GM12878 (cell line): ENCODE measurements at regions of chr1 and their contacts with region 1.

Region 1: DNA sequence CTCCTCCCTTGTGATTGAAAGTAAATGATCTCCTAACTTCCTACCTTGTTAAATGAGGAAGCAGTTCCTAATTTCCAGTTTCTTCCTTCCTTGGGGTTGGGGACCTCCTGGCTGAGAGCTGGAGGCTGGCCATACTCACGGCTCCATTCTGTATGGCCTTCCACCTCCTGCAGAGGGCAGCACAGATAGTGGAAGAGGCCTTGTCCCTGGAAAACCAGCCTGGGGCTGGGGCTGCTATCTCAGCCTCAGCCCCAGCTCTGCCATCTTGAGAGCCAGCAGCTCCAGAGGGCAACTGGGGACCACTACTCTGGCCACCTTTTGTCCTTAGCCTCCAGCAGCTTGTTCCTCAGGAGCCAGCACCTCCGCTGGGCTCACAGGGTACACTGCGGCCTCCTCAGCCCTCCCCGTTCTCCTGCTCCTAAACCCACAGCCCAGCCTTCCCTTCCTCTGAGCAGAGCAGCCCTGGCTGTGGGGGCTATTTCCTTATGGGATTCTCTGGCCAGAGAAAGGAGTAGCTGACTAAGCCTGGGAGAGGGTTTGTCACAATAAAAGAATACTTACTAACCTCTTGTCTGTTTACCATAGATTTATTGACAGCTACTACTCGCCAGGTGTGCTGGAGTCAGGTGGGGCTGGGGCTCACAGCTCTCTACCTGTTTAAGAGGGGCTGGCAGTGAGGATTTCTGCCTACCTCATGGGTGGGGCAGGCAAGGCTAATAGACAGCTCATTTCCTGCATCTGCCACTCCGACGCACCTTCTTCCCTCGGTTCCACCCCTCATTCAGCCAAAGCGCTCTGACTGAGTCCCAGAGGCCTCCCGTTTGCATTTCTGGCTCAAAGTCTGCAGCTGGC is 6.3 kb downstream of the TMEM234 start:
- DNase-seq: no peak
- ATAC-seq: peak; percentile 95
- H3K4me3 ChIP-seq: no peak overlapping the region
- H3K27ac ChIP-seq: no peak overlapping the region
- H3K4me1 ChIP-seq: no peaks in the 10 kb centered on the region
- H3K27me3 ChIP-seq: no peaks in the 10 kb centered on the region
- CTCF ChIP-seq: peak; percentile 82 to 93 (median 91)
- EP300 ChIP-seq: no peak
- POLR2A ChIP-seq: no peak
- RAD21 ChIP-seq: peak; percentile 82

Region 2: GRCh38 chr1:31584041-31584868 is 631.6 kb before region 1 on chr1:
- CTCF ChIA-PET with region 1: no interaction called
- POLR2A ChIA-PET with region 1: no interaction called
- RAD21 ChIA-PET with region 1: no interaction called
- SMC1A ChIA-PET with region 1: no interaction called
- in situ Hi-C with region 1: no loop called
- intact Hi-C with region 1: no loop called
- DNase-seq: no peak
- ATAC-seq: no peak
- H3K4me3 ChIP-seq: no peak overlapping the region
- H3K27ac ChIP-seq: no peak overlapping the region
- H3K4me1 ChIP-seq: no peaks in the 10 kb centered on the region
- H3K27me3 ChIP-seq: no peaks in the 10 kb centered on the region; a peak in 2 of 4 replicates
- CTCF ChIP-seq: no peak
- EP300 ChIP-seq: no peak
- POLR2A ChIP-seq: no peak
- RAD21 ChIP-seq: no peak

Region 3: DNA sequence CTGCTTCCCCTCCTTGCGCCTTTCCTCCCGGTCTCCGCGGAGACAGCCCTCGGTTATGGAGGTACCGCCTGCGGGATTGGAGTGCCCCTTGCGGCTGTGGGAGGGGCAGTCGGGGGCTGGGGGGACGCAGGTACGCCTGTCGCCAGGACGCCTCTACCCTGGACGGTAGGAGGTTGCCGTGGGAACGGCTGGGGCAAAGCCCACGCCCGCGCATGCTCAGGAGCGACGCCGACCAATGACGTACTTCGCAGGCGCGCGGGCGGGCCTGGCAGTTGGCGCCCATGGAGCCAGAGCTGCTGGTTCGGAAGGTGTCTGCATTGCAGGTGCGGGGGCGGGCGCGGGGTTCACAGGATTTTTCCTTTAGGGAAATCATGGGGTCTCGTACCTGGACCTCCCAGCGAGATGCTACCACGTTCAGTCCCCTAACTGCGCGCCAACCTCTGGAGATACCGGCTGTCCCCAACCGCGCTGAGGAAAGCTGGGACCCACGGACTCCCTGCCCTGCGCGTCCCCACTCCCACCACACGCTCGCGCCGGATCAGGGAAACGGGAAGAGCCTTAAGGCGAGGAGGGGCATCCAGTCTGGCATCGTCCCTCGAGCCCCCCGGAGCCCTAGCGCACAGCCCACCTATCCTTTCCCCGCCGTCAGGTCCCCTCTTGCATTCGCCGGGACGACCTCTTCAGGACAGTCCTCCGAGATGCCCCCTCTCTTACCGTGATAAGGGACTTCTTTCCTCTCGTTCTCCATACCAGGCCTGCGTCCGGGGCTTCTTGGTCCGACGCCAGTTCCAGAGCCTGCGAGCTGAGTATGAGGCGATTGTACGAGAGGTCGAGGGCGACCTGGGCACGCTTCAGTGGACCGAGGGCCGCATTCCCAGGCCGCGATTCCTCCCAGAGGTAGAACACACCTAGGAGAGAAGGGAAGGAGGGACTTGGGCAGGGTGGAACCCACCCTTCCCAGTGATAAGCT is 10.2 kb before region 1 on chr1 and contains the start of gene IQCC:
- CTCF ChIA-PET with region 1: interaction called, 27 read pairs
- POLR2A ChIA-PET with region 1: interaction called, 12 read pairs
- RAD21 ChIA-PET with region 1: interaction called, 10 read pairs
- SMC1A ChIA-PET with region 1: interaction called, 15 read pairs
- in situ Hi-C with region 1: no loop called
- intact Hi-C with region 1: no loop called
- DNase-seq: peak; percentile 46
- ATAC-seq: peak; percentile 68
- H3K4me3 ChIP-seq: peak within 1 kb of the TSS; percentile 80
- H3K27ac ChIP-seq: peak within 1 kb of the TSS; percentile 69
- H3K4me1 ChIP-seq: peaks cover 26% of the 10 kb centered on the region
- H3K27me3 ChIP-seq: no peaks in the 10 kb centered on the region
- CTCF ChIP-seq: no peak
- EP300 ChIP-seq: no peak
- POLR2A ChIP-seq: peak; percentile 90
- RAD21 ChIP-seq: no peak
- polyA plus RNA-seq, gene IQCC: 2.1 to 3.8 TPM

Region 4: DNA sequence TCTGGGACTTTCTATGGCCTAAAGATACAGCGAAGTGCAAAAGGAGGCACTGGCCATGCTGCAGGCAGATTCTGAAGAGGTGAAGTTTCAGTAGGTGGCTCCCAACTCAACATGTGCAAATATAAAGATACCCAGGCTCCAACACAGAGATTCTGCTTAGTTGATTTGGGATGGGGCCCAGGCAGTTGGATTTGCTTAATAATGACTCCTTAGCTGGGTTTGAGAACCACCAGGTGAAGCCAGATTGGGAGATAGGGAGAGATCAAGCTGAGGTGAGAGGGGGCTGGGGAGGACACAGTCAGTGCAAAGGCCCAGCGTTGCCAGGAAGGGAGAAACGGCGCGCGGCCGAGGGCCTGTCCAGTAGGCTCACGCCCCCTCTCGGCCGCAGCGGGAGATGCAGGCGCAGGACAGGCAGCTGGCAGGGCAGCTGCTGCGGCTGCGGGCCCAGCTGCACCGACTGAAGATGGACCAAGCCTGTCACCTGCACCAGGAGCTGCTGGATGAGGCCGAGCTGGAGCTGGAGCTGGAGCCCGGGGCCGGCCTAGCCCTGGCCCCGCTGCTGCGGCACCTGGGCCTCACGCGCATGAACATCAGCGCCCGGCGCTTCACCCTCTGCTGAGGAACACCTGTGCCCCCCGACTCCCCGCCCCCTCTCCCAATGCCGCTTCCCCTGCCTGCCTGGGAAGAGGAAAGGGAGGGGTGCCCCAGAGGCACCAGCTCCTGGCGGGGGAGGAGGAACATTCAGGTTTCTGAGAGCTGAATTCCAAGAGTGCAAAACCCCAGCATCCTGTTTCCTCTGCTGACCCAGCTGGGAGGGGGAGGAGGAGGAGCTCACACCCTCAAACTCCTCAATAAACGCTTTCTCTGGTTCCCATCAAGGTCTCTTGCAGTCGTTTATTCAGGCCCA is 32.4 kb after region 1 on chr1:
- CTCF ChIA-PET with region 1: interaction called, 123 read pairs
- POLR2A ChIA-PET with region 1: interaction called, 18 read pairs
- RAD21 ChIA-PET with region 1: interaction called, 45 read pairs
- SMC1A ChIA-PET with region 1: interaction called, 44 read pairs
- in situ Hi-C with region 1: no loop called
- intact Hi-C with region 1: no loop called
- DNase-seq: no peak
- ATAC-seq: peak; percentile 69
- H3K4me3 ChIP-seq: peak overlapping the region; percentile 10; the same call in 1 of the 2 replicates
- H3K27ac ChIP-seq: peak overlapping the region; percentile 89
- H3K4me1 ChIP-seq: peaks cover 52% of the 10 kb centered on the region
- H3K27me3 ChIP-seq: no peaks in the 10 kb centered on the region
- CTCF ChIP-seq: peak; percentile 89 to 99 (median 96)
- EP300 ChIP-seq: no peak
- POLR2A ChIP-seq: peak; percentile 31; the same call in 1 of the 2 replicates
- RAD21 ChIP-seq: peak; percentile 64

Region 5: GRCh38 chr1:32307323-32307722 is 91.5 kb after region 1 on chr1:
- CTCF ChIA-PET with region 1: interaction called, 12 read pairs
- POLR2A ChIA-PET with region 1: no interaction called
- RAD21 ChIA-PET with region 1: interaction called, 5 read pairs
- SMC1A ChIA-PET with region 1: interaction called, 3 read pairs
- in situ Hi-C with region 1: no loop called
- intact Hi-C with region 1: no loop called
- DNase-seq: no peak
- ATAC-seq: no peak
- H3K4me3 ChIP-seq: no peak overlapping the region
- H3K27ac ChIP-seq: 0 out of 2 replicates have a peak overlapping the region, but pooled peaks have one; percentile 8
- H3K4me1 ChIP-seq: peaks cover 14% of the 10 kb centered on the region
- H3K27me3 ChIP-seq: no peaks in the 10 kb centered on the region
- CTCF ChIP-seq: no peak
- EP300 ChIP-seq: no peak
- POLR2A ChIP-seq: no peak
- RAD21 ChIP-seq: no peak

Region 6: GRCh38 chr1:32372149-32372756 is 156.4 kb after region 1 on chr1:
- CTCF ChIA-PET with region 1: interaction called, 15 read pairs
- POLR2A ChIA-PET with region 1: interaction called, 3 read pairs
- RAD21 ChIA-PET with region 1: interaction called, 6 read pairs
- SMC1A ChIA-PET with region 1: interaction called, 9 read pairs
- in situ Hi-C with region 1: no loop called
- intact Hi-C with region 1: no loop called
- DNase-seq: peak; percentile 61
- ATAC-seq: peak; percentile 88
- H3K4me3 ChIP-seq: no peak overlapping the region
- H3K27ac ChIP-seq: no peak overlapping the region
- H3K4me1 ChIP-seq: peaks cover 10% of the 10 kb centered on the region
- H3K27me3 ChIP-seq: no peaks in the 10 kb centered on the region
- CTCF ChIP-seq: peak; percentile 6 to 46 (median 33); a peak in 3 of 6 replicates
- EP300 ChIP-seq: no peak
- POLR2A ChIP-seq: no peak
- RAD21 ChIP-seq: peak; percentile 63

Region 7: DNA sequence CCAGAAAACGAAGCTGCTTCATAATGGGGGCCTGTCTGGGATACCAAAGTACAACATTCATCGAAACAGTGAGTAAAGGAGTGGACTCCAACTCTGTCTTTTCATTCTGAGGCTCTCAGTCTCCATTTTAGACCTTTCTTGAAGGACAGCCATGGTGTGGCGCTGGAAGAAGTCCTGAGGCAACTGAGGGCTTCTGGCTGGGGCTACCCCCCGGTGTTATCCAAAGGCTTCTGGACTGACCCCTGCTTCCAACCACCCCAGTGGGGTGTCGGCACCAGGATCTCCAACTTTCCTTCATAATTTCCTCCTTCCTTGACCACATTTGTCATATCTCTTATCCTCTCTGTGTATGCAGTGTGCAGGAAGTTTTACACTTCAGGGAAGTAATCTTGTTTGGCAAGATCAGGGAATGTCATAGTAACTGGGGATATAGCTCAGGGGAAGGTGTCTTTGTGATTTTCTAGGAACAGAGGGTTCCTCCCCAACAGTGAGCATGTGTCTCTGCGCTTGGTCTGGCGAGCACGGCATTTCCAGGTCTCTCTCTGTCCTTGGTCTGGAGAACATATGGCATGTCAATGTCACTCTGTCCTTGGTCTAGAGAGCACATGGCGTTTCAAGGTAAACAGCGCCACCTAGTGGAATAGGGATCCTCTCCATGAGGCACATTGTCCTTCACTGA is 197.8 kb after region 1 on chr1:
- CTCF ChIA-PET with region 1: interaction called, 15 read pairs
- POLR2A ChIA-PET with region 1: no interaction called
- RAD21 ChIA-PET with region 1: interaction called, 14 read pairs
- SMC1A ChIA-PET with region 1: interaction called, 7 read pairs
- in situ Hi-C with region 1: no loop called
- intact Hi-C with region 1: loop called (anchors 1 kb)
- DNase-seq: peak; percentile 48
- ATAC-seq: peak; percentile 99
- H3K4me3 ChIP-seq: no peak overlapping the region
- H3K27ac ChIP-seq: no peak overlapping the region
- H3K4me1 ChIP-seq: no peaks in the 10 kb centered on the region; the same call in 1 of the 2 replicates
- H3K27me3 ChIP-seq: no peaks in the 10 kb centered on the region; a peak in 1 of 4 replicates
- CTCF ChIP-seq: peak; percentile 76 to 82 (median 78)
- EP300 ChIP-seq: no peak
- POLR2A ChIP-seq: no peak
- RAD21 ChIP-seq: peak; percentile 86

Region 8: GRCh38 chr1:32786856-32787255 is 571.0 kb after region 1 on chr1:
- CTCF ChIA-PET with region 1: no interaction called
- POLR2A ChIA-PET with region 1: no interaction called
- RAD21 ChIA-PET with region 1: no interaction called
- SMC1A ChIA-PET with region 1: no interaction called
- in situ Hi-C with region 1: no loop called
- intact Hi-C with region 1: no loop called
- DNase-seq: no peak
- ATAC-seq: peak; percentile 73
- H3K4me3 ChIP-seq: no peak overlapping the region
- H3K27ac ChIP-seq: no peak overlapping the region
- H3K4me1 ChIP-seq: peaks cover 2% of the 10 kb centered on the region; the same call in 1 of the 2 replicates
- H3K27me3 ChIP-seq: no peaks in the 10 kb centered on the region
- CTCF ChIP-seq: peak in 1 of 3 experiments; percentile 17; a peak in 1 of 6 replicates
- EP300 ChIP-seq: no peak
- POLR2A ChIP-seq: no peak
- RAD21 ChIP-seq: 0 out of 2 replicates have a peak, but pooled peaks have one; percentile 11